ENCODE measurements at regions of chr5 and their contacts with region 1.

Region 1: DNA sequence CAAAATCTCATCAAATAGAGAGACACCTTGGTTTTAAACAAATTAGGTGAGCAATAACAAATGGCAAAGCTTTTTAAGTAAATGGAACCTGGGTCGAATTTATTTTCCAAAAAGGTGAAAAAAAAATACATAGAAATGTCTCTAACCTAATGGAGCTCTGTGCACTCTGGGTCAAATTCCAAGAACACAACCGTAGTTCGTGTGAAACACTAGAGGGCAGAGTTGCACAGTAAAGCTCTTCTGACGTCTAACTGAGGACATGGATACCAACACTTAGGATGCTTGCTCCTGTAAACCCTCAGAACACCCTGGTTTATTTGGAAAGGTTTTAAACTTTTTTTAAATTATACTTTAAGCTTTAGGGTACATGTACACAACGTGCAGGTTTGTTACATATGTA is 18.9 kb downstream of the MARCHF11 start:
- DNase-seq: peak; percentile 47
- H3K4me3 ChIP-seq: no peak overlapping the region
- H3K27ac ChIP-seq: no peak overlapping the region
- H3K4me1 ChIP-seq: no peaks in the 10 kb centered on the region
- H3K27me3 ChIP-seq: no peaks in the 10 kb centered on the region
- CTCF ChIP-seq: peak; percentile 57 to 67
- POLR2A ChIP-seq: no peak

Region 2: DNA sequence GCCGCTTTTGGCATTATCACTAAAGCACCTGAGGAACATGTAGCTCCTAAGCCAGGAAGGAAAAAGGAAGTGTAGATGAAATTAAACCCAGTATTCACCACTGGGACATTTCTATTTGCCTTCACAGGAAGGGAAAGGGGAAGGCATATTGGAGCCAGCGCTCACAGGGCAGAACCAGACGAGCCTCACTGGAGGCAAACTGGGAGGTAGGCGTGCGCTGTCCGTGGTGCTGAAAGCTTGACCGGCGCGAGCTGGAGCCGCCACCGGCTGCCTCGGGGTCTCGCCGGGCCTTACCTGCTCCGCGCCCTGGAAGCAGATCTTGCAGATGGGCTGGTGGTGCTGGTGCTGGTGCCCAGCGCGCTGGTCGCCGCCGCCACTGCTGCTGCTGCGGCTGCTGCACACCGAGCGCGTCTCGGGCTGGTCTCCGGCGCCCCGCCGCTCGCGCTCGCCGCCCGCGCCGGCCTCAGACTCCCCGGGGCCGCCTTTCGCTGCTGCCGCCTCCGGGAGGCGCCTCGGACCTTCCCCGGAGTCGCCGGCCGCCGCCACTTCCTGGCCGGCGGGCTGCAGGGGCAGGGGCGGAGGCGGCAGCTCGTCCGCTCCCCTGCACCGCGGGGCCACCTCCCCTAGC is 18.2 kb after region 1 on chr5:
- CTCF ChIA-PET with region 1: interaction called, 11 read pairs
- POLR2A ChIA-PET with region 1: no interaction called
- dilution Hi-C with region 1: no loop called
- intact Hi-C with region 1: no loop called
- DNase-seq: peak; percentile 60
- H3K4me3 ChIP-seq: peak overlapping the region in 1 of 3 experiments; percentile 25
- H3K27ac ChIP-seq: no peak overlapping the region
- H3K4me1 ChIP-seq: no peaks in the 10 kb centered on the region
- H3K27me3 ChIP-seq: peaks cover 22 to 36% of the 10 kb centered on the region in 2 experiments
- CTCF ChIP-seq: no peak
- POLR2A ChIP-seq: no peak

Region 3: GRCh38 chr5:16446993-16447392 is 286.3 kb after region 1 on chr5:
- CTCF ChIA-PET with region 1: interaction called, 14 read pairs
- POLR2A ChIA-PET with region 1: no interaction called
- dilution Hi-C with region 1: no loop called
- intact Hi-C with region 1: no loop called
- DNase-seq: no peak
- H3K4me3 ChIP-seq: no peak overlapping the region
- H3K27ac ChIP-seq: no peak overlapping the region
- H3K4me1 ChIP-seq: no peaks in the 10 kb centered on the region
- H3K27me3 ChIP-seq: no peaks in the 10 kb centered on the region
- CTCF ChIP-seq: no peak
- POLR2A ChIP-seq: no peak

Region 4: GRCh38 chr5:16456103-16456832 is 295.6 kb after region 1 on chr5:
- CTCF ChIA-PET with region 1: interaction called, 178 read pairs
- POLR2A ChIA-PET with region 1: no interaction called
- dilution Hi-C with region 1: no loop called
- intact Hi-C with region 1: loop called (anchors 1 kb)
- DNase-seq: peak; percentile 75
- H3K4me3 ChIP-seq: no peak overlapping the region
- H3K27ac ChIP-seq: peak overlapping the region; percentile 85
- H3K4me1 ChIP-seq: peaks cover 12% of the 10 kb centered on the region
- H3K27me3 ChIP-seq: no peaks in the 10 kb centered on the region
- CTCF ChIP-seq: peak; percentile 56 to 65
- POLR2A ChIP-seq: no peak

Region 5: DNA sequence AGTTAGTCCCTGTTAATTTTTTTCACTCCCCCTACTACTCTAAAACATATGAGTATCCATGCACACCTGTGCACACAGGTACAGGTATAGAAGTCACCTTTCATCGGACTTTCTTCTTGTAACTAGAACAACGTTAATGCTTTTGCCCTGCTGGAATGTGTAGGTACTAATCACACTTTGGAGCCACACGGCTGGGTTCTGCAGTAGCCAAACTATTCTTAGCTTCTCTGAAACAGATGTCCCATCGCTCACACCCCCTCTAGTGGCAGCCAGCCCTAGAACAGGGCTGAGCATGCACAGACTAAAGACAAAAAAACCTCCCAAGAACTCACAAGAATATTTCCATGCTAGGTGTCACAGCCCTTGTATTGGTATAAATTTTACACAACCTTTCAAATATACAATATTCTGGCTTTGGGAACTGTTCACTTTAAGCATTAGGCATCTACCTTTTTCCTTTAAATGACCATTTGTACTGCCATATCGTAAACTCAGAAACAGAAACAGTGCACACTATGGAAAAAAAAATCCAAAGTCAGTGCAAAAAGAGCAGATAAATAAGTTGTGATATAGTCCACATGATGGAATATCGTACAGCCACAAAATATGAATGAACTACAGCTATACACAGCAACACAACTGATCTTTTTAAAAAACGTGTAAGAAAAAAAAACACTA is 392.1 kb after region 1 on chr5:
- CTCF ChIA-PET with region 1: interaction called, 31 read pairs
- POLR2A ChIA-PET with region 1: no interaction called
- dilution Hi-C with region 1: no loop called
- intact Hi-C with region 1: loop called (anchors 1 kb)
- DNase-seq: peak; percentile 52
- H3K4me3 ChIP-seq: no peak overlapping the region
- H3K27ac ChIP-seq: no peak overlapping the region
- H3K4me1 ChIP-seq: no peaks in the 10 kb centered on the region
- H3K27me3 ChIP-seq: peaks cover 4 to 5% of the 10 kb centered on the region in 2 experiments
- CTCF ChIP-seq: peak; percentile 78 to 87
- POLR2A ChIP-seq: no peak

Region 6: DNA sequence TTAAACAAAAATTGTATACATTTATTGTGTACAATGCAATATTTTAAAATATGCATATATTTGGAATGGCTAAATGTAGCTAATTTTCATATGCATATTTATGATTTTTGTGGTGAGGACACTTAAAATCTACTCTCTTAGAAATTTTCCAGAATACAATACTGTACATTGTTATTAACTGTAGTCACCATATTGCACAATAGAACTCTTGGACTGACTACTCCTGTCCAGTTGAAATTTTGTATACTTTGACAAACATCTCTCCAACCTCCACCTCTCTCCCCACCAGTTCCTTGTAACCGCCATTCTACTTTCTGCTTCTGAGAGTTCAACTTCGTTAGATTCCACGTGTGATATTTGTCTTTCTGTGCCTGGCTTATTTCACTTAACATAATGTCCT is 1288.2 kb after region 1 on chr5:
- CTCF ChIA-PET with region 1: no interaction called
- POLR2A ChIA-PET with region 1: no interaction called
- dilution Hi-C with region 1: no loop called
- intact Hi-C with region 1: no loop called
- DNase-seq: no peak
- H3K4me3 ChIP-seq: no peak overlapping the region
- H3K27ac ChIP-seq: no peak overlapping the region
- H3K4me1 ChIP-seq: no peaks in the 10 kb centered on the region
- H3K27me3 ChIP-seq: peaks cover 2 to 3% of the 10 kb centered on the region in 2 experiments
- CTCF ChIP-seq: no peak
- POLR2A ChIP-seq: no peak